ENCODE measurements at regions of chr9 and their contacts with region 1.

Region 1: DNA sequence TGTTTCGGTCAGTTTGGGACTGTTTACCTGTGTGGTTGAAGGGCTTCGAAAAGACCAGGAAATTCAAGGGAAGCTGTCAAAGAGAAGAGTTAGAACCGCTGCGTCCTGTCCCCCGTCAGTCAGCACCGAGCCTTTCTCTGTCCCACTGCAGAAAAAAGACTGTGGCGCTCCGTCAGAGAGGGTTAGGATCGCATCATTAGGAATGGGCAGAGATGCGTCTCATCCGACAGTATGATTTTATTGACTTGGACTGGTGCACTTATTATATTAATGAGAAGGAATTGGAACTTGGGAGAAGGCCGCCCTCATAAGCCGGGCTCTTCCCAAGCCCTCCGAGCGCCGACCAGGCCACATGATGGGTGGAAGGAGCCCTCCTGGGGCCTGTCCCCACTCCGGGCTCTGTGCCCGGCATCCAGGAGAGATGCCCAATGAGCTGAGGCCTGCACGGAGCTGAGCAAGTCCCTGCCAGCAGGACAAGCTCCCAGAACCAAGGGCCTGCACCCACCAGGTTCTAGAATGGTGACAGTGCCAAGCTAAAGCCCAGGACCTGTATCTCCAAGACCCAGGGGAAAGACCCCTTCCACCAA is 71.5 kb downstream of the NEK6 start:
- DNase-seq: no peak
- ATAC-seq: no peak

Region 2: DNA sequence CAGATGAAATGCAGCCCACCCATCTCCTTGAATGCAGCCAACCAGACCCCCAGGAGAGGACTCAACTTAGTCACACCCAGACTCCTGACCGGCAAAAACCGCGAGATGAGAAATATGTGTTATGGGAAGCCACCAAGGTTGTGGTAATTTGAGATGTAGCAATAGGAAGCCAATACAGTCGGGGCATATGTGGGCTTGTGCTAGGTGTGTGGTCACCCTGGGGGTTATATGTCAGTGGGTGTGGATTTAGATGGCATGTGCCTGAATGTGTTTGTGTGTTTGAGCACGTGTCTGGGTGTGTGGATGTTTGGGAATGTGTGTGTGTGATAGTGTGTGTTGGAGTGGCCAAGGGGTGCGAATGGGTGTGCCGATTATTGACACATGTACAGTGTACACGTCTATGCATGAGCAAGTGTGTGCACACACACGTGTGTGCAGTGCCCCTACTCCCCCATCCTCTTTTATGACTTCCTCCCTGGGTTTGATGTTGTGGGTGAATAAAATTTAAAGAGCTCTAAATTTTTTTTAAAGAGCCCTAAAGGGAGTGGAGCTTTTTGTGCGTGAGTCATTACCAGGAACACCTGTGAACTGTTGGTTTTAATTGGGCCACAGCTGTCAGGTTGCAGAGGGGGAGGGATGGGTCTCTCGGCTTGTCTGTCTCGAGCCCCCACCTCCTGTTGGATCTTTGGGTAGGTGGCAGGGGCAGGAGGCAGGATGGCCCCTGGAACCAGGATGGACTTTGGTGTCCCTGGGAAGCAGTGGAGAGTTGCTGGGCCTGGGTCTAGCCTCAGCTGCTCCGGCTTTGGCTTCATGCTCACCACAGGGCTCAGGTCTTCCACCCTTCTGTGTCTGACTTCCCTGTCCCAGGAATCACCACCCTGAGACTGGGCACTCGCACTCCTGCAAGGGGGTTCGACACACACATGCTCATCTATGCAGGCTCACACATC is 230.9 kb before region 1 on chr9:
- intact Hi-C with region 1: no loop called
- DNase-seq: no peak
- ATAC-seq: no peak

Region 3: DNA sequence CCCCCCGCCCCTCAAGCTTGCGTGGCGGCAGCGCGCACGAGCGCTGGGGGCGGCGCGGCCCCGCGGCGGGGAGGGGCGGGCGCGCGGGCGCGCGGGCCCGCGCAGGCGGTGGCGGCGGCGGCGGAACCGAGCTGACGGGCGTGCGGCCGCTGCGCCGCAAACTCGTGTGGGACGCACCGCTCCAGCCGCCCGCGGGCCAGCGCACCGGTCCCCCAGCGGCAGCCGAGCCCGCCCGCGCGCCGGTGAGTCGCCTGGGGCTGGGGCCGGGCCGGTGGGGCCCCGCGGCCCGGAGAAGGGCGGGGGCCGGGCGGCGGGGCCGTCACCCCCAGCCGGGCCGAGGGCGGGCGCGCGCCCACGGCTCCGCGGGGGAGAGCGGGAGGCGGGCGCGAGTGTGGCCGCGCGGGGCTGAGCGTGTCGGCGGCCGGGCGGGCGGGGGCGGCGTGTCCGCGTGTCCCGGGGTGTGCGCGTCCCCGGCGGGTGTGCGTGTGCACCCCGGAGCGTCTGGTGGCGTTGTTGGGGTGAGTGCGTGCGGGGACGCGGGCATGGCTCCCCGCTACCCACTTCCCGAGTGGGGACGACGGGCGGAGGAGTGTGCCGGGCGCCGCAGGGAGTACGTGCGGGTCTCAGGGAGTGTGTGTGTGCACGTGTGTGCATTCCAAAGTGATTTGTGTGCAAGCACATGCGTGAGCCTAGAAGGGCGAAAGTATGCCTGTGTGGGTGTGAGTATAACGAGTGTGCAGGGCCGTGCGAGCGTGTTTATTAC is 71.3 kb before region 1 on chr9 and contains the start of gene NEK6:
- intact Hi-C with region 1: no loop called
- DNase-seq: peak; percentile 67
- ATAC-seq: peak; percentile 68
- total RNA-seq, gene NEK6: 10.3 TPM

Region 4: GRCh38 chr9:124377551-124378406 is 48.5 kb after region 1 on chr9:
- intact Hi-C with region 1: loop called (anchors 5 kb)
- DNase-seq: no peak
- ATAC-seq: peak; percentile 73